BJ (cell line): ENCODE measurements at regions of chr6 and their contacts with region 1.

Region 1: GRCh38 chr6:85642774-85643536 is at the start of gene SYNCRIP:
- DNase-seq: peak; percentile 82
- H3K4me3 ChIP-seq: peak within 1 kb of the TSS; percentile 88
- H3K27me3 ChIP-seq: no peaks in the 10 kb centered on the region
- CTCF ChIP-seq: no peak
- polyA plus RNA-seq, gene SYNCRIP: 7.6 and 20.0 TPM in 2 replicates

Region 2: DNA sequence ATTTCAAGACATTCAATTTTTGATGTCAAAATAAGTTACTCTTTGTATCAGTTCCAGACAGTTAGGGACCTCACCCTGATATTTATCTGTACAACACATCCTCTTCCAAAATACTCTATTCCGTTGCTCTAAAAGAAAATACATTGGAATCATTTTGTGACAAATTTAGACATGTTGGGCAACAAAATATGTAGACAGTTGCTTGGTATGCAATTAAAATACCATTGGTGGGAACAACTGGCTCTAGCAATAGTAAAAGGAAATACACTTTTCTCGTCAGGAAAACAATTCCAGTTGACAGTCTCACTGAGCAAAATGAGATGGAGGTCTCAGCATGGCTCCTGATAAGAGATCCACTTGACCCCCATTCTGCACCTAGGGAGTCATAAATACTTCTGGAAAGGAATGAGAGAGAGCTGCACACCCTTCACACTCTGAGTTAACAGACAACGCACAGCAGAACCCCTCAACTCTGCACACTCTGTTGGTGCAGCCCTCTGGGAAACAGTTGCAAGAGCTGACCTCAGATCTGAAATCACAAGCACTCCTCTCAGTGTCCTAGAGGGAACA is 364.4 kb before region 1 on chr6:
- CTCF ChIA-PET with region 1: no interaction called
- POLR2A ChIA-PET with region 1: no interaction called
- DNase-seq: no peak
- H3K4me3 ChIP-seq: no peak overlapping the region
- H3K27me3 ChIP-seq: no peaks in the 10 kb centered on the region
- CTCF ChIP-seq: no peak

Region 3: DNA sequence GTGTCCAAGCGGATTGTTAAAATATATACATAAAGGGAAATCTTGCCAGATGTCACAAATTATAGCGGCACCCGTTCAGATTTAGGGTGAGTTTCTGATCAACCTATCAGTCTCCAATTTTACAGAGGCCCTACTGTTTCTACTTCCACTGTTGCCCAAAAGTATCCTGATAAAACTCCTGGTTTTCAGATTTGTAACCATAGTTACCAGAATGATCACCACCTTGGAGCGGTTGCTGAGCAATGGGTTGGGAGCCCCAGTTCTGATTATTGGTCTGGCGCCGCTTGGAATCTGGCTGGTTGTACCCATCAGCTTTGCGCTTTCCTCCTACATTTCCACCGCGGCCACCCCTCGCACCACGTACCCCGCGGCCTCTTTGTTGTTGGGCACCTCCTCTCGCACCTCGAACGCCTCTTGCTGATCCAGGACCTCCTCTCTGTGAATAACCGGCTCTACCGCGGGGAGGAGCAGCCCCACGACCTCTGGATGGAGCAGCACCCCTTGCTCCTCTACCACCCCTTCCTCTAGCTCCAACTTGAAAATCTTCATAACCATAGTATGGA is 28.3 kb before region 1 on chr6:
- CTCF ChIA-PET with region 1: no interaction called
- POLR2A ChIA-PET with region 1: no interaction called
- DNase-seq: no peak
- H3K4me3 ChIP-seq: no peak overlapping the region
- H3K27me3 ChIP-seq: no peaks in the 10 kb centered on the region
- CTCF ChIP-seq: no peak

Region 4: GRCh38 chr6:85669735-85670194 is 26.8 kb after region 1 on chr6:
- CTCF ChIA-PET with region 1: interaction called, 3 read pairs
- POLR2A ChIA-PET with region 1: interaction called, 12 read pairs
- DNase-seq: peak; percentile 29
- H3K4me3 ChIP-seq: no peak overlapping the region
- H3K27me3 ChIP-seq: no peaks in the 10 kb centered on the region
- CTCF ChIP-seq: no peak

Region 5: GRCh38 chr6:85678602-85679444 is 35.9 kb after region 1 on chr6:
- CTCF ChIA-PET with region 1: interaction called, 7 read pairs
- POLR2A ChIA-PET with region 1: interaction called, 62 read pairs
- DNase-seq: peak; percentile 97
- H3K4me3 ChIP-seq: peak overlapping the region; percentile 97
- H3K27me3 ChIP-seq: no peaks in the 10 kb centered on the region
- CTCF ChIP-seq: no peak